ENCODE measurements at regions of chr5 and their contacts with region 1.

Region 1: GRCh38 chr5:179907570-179908324 is at the start of gene TBC1D9B:
- DNase-seq: peak; percentile 27
- ATAC-seq: peak; percentile 87
- H3K4me3 ChIP-seq: peak within 1 kb of the TSS; percentile 82 to 86 (median 85)
- H3K27ac ChIP-seq: peak within 1 kb of the TSS; percentile 36
- H3K4me1 ChIP-seq: peaks cover 18% of the 10 kb centered on the region
- H3K27me3 ChIP-seq: 0 out of 5 replicates have a peak, but pooled peaks cover 0 to 4% of the 10 kb centered on the region in 2 experiments
- CTCF ChIP-seq: peak; percentile 36; the same call in 1 of the 2 replicates
- EP300 ChIP-seq: no peak
- POLR2A ChIP-seq: peak; percentile 63 to 68
- RAD21 ChIP-seq: no peak; the same call in 1 of the 2 replicates
- total RNA-seq, gene TBC1D9B: 26.8 and 35.0 TPM in 2 replicates

Region 2: GRCh38 chr5:180071531-180072255 is 163.9 kb after region 1 on chr5 and contains the start of gene RNF130:
- CTCF ChIA-PET with region 1: no interaction called
- POLR2A ChIA-PET with region 1: no interaction called
- in situ Hi-C with region 1: no loop called
- intact Hi-C with region 1: loop called (anchors 5 kb)
- DNase-seq: peak; percentile 80
- ATAC-seq: peak; percentile 84
- H3K4me3 ChIP-seq: peak within 1 kb of the TSS; percentile 71 to 91 (median 85)
- H3K27ac ChIP-seq: peak within 1 kb of the TSS; percentile 90
- H3K4me1 ChIP-seq: peaks cover 32% of the 10 kb centered on the region
- H3K27me3 ChIP-seq: peaks cover 0 to 21% of the 10 kb centered on the region in 2 experiments; a peak in 3 of 5 replicates
- CTCF ChIP-seq: peak; percentile 7; the same call in 1 of the 2 replicates
- EP300 ChIP-seq: no peak
- POLR2A ChIP-seq: peak; percentile 72 to 79
- RAD21 ChIP-seq: peak; percentile 76
- total RNA-seq, gene RNF130: 21.3 and 28.2 TPM in 2 replicates

Region 3: DNA sequence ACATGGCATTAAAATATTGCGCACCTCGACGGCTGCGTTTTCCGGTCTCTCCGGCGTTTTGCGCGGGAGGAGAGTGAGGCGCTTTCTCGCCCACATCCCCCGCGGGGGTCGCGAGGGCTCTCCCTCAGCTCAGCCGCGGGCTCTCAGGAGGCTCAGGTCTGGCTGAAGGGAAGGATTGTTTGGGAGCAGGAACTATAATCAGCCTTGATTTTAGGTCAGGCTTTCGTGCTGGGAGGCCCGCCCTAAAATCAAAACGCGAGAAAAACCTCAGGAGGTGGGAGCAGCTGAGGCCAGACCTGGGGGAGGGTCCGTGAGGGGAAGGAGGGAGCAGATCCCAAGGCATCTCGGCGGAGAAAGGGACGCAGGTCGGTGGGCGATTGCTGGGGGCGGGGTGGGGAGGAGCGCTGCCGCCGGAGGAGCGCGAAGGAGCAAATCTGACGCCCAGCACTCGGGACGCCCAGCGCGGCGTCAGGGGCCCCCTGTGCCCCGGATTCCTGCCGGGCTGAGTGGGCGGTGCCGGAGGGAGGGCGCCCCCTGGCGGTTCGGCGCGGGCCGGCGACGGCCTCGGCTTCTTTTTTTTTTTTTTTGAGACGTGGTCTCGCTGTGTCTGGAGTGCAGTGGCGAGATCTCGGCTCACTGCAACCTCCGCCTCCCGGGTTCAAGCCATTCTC is 182.5 kb after region 1 on chr5:
- CTCF ChIA-PET with region 1: no interaction called
- POLR2A ChIA-PET with region 1: no interaction called
- in situ Hi-C with region 1: no loop called
- intact Hi-C with region 1: loop called (anchors 2 kb)
- DNase-seq: peak; percentile 36
- ATAC-seq: peak; percentile 82
- H3K4me3 ChIP-seq: peak overlapping the region; percentile 34 to 59 (median 52); a peak in 4 of 6 replicates
- H3K27ac ChIP-seq: no peak overlapping the region
- H3K4me1 ChIP-seq: peaks cover 14% of the 10 kb centered on the region; the same call in 1 of the 2 replicates
- H3K27me3 ChIP-seq: peaks cover 1 to 4% of the 10 kb centered on the region in 2 experiments; a peak in 3 of 5 replicates
- CTCF ChIP-seq: peak; percentile 72
- EP300 ChIP-seq: no peak
- POLR2A ChIP-seq: no peak
- RAD21 ChIP-seq: no peak